ENCODE measurements at regions of chr2 and their contacts with region 1.

Region 1: GRCh38 chr2:234368861-234369261 is 128.0 kb downstream of the ARL4C start:
- DNase-seq: no peak
- ATAC-seq: no peak
- H3K4me3 Mint-ChIP-seq: no peak overlapping the region
- H3K27ac Mint-ChIP-seq: no peak overlapping the region
- H3K4me1 Mint-ChIP-seq: peaks cover 13% of the 10 kb centered on the region
- H3K27me3 Mint-ChIP-seq: peaks cover 14% of the 10 kb centered on the region
- CTCF ChIP-seq: no peak

Region 2: GRCh38 chr2:234334151-234334550 is 34.7 kb before region 1 on chr2:
- CTCF ChIA-PET with region 1: no interaction called
- POLR2A ChIA-PET with region 1: no interaction called
- intact Hi-C with region 1: loop called (anchors 5 kb)
- DNase-seq: no peak
- ATAC-seq: no peak
- H3K4me3 Mint-ChIP-seq: no peak overlapping the region
- H3K27ac Mint-ChIP-seq: no peak overlapping the region
- H3K4me1 Mint-ChIP-seq: peaks cover 19% of the 10 kb centered on the region
- H3K27me3 Mint-ChIP-seq: peaks cover 33% of the 10 kb centered on the region
- CTCF ChIP-seq: no peak

Region 3: GRCh38 chr2:234403108-234403507 is 34.2 kb after region 1 on chr2:
- CTCF ChIA-PET with region 1: no interaction called
- POLR2A ChIA-PET with region 1: no interaction called
- intact Hi-C with region 1: no loop called
- DNase-seq: no peak
- ATAC-seq: no peak
- H3K4me3 Mint-ChIP-seq: no peak overlapping the region
- H3K27ac Mint-ChIP-seq: no peak overlapping the region
- H3K4me1 Mint-ChIP-seq: peaks cover 9% of the 10 kb centered on the region
- H3K27me3 Mint-ChIP-seq: peaks cover 12% of the 10 kb centered on the region
- CTCF ChIP-seq: no peak

Region 4: DNA sequence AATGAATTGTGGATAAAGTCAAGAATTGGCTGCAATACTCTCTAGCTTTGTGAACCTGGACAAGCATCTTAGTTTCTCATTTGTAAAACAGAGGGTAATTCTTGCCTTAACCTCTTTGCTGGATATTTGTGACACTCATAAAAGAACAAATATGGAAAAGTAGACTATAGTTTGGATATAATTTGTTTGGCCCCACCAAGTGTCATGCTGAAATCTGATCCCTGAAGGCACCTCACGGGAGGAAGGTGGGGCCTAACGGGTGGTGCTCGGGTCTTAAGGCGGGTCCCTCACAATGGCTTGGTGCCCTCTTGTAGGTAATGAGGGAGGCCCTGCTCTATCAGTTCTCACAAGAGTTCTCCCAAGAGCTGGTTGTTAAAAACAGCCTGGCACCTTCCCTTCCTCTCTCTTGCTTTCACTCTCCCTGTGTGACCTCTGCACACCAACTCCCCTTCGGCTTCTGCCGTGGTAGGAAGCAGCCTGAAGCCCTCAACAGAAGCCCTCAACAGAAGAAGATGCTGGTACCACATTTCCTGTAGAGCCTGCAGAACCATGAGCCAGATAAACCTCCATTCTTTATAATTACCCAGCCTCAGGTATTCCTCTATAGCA is 90.6 kb after region 1 on chr2:
- CTCF ChIA-PET with region 1: no interaction called
- POLR2A ChIA-PET with region 1: no interaction called
- intact Hi-C with region 1: no loop called
- DNase-seq: no peak
- ATAC-seq: no peak
- H3K4me3 Mint-ChIP-seq: no peak overlapping the region
- H3K27ac Mint-ChIP-seq: no peak overlapping the region
- H3K4me1 Mint-ChIP-seq: peaks cover 26% of the 10 kb centered on the region
- H3K27me3 Mint-ChIP-seq: no peaks in the 10 kb centered on the region
- CTCF ChIP-seq: no peak